ENCODE measurements at regions of chr16 and their contacts with region 1.

Region 1: GRCh38 chr16:68229431-68230198 is 6.3 kb downstream of the ESRP2 start:
- DNase-seq: peak in 1 of 2 donors; percentile 45
- ATAC-seq: no peak

Region 2: DNA sequence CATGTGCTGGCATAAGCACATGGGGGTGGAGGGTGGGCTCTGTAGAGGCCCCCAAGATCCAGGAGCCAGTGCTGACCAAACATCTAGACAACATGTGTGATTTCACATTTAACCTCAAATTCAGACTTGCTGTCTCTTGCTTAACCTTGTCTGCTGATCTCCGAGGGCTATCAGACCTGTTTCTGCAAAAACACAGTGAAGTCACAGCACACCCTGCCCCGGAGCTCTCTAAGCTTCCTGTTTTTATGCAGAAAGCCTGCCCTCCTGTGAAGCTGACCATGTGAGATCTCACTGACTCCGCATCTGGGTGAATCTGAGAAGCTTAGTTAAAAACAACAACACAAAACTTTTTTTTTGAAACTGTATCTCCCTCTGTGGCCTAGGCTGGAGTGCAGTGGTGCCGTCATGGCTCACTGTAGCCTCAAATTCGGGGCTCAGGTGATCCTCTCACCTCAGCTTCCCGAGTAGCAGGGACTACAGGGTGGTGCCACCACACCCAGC is 223.8 kb before region 1 on chr16:
- intact Hi-C with region 1: no loop called
- DNase-seq: peak in 1 of 2 donors; percentile 46
- ATAC-seq: peak; percentile 33

Region 3: DNA sequence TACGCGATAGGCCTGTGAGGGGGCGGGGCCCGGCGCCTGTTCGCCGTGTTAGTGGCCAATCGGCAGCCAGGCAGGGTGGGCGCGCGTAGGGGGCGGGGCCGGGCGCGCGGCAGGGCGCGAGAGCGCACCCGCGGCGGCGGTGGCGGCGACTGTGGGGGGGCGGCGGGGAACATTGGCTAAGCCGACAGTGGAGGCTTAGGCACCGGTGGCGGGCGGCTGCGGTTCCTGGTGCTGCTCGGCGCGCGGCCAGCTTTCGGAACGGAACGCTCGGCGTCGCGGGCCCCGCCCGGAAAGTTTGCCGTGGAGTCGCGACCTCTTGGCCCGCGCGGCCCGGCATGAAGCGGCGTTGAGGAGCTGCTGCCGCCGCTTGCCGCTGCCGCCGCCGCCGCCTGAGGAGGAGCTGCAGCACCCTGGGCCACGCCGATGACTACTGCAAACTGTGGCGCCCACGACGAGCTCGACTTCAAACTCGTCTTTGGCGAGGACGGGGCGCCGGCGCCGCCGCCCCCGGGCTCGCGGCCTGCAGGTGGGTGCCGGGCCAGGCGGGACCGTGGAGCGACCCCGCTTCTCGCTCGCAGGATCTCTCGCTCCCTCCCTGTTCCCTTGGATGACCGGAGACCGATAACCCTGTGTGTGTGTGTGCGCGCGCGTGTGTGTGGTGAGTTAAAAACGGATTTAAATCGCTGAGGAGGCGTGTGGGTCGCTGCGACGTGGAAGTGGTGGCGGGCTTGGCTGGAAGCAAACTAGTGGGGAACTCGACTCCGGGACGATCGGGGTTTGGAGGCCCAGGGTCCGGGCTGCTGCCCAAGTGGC is 144.2 kb before region 1 on chr16 and contains the start of gene NFATC3:
- intact Hi-C with region 1: loop called (anchors 5 to 10 kb)
- DNase-seq: peak; percentile 99
- ATAC-seq: peak; percentile 83
- total RNA-seq, gene NFATC3: 24.6 to 24.9 TPM

Region 4: DNA sequence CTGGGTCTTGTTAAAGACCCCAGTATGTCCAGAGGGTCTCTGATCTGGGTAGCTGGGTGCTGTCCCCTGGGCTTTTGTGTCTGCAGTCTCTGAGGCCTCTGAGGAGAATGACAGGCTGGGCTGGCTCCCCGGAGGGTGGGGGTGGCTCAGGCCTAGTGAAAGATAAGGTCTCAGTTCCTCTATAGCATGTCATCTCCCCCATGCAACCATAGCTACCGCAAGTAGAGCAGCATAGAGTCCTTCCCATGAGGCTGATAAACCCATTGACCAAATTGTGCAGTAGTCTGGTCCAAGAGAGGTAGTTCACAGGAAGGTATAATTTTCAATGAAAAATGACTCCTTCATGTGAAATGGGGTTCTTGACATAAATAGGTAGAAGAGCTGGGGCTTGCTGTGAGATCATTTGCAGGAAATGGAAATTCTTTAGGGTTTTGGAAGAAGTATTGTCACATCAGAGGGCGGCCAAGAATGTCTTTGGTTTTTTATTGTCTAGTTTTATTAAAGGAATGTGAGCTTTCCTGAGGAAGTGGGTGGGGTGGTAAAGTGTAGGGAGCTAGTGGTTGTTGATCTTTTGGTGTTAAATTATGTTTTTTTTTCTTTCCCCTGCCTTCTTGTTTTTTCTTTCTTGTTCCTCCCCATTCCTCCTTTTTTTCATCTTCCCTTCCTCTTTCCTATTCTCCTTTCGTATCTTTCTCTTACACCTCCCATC is 60.2 kb after region 1 on chr16:
- intact Hi-C with region 1: no loop called
- DNase-seq: no peak
- ATAC-seq: no peak

Region 5: GRCh38 chr16:68328151-68328859 is 98.7 kb after region 1 on chr16:
- intact Hi-C with region 1: no loop called
- DNase-seq: peak; percentile 68 to 78
- ATAC-seq: peak; percentile 99